Prostate gland (tissue), 2 donors: ENCODE measurements at regions of chr1 and their contacts with region 1.

Region 1: GRCh38 chr1:42035830-42036604 is 117.2 kb upstream of the GUCA2B start:
- DNase-seq: peak; percentile 95
- H3K4me3 ChIP-seq: peak overlapping the region; percentile 70 to 96
- H3K27ac ChIP-seq: peak overlapping the region; percentile 78 to 85
- H3K4me1 ChIP-seq: no peaks in the 10 kb centered on the region
- H3K27me3 ChIP-seq: no peaks in the 10 kb centered on the region
- CTCF ChIP-seq: no peak
- POLR2A ChIP-seq: peak; percentile 46

Region 2: GRCh38 chr1:41662061-41662764 is 373.8 kb before region 1 on chr1:
- intact Hi-C with region 1: loop called (anchors 5 kb)
- DNase-seq: peak; percentile 73
- H3K4me3 ChIP-seq: peak overlapping the region; percentile 56 to 59
- H3K27ac ChIP-seq: peak overlapping the region; percentile 84 to 87
- H3K4me1 ChIP-seq: no peaks in the 10 kb centered on the region
- H3K27me3 ChIP-seq: no peaks in the 10 kb centered on the region
- CTCF ChIP-seq: peak in 1 of 4 experiments; percentile 2
- POLR2A ChIP-seq: peak; percentile 82